Sciatic nerve (tissue), 2 donors: ENCODE measurements at regions of chr2 and their contacts with region 1.

Region 1: GRCh38 chr2:189552334-189552990 is 28.1 kb downstream of the SLC40A1 start:
- DNase-seq: no peak
- ATAC-seq: peak; percentile 75

Region 2: DNA sequence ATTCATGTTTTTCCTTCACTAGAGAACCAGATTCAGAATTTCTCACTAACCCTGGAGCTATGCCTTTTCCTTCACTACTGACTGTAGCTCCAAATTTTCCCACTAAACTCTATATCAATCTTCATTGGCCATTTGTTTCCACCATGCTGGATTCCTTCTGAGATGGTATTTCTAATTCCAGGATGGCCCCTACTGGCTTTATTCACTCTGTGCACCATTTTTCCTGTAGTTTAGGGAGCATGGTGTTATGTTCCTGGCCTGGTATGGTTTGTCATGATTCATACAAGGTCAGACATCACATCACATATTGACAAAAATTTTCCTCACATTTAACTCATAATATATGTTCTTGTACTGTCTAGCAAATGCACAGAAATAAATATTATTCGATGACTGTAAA is 1769.0 kb before region 1 on chr2:
- intact Hi-C with region 1: loop called (anchors 5 kb)
- DNase-seq: no peak
- ATAC-seq: no peak